ENCODE measurements at regions of chr1 and their contacts with region 1.

Region 1: DNA sequence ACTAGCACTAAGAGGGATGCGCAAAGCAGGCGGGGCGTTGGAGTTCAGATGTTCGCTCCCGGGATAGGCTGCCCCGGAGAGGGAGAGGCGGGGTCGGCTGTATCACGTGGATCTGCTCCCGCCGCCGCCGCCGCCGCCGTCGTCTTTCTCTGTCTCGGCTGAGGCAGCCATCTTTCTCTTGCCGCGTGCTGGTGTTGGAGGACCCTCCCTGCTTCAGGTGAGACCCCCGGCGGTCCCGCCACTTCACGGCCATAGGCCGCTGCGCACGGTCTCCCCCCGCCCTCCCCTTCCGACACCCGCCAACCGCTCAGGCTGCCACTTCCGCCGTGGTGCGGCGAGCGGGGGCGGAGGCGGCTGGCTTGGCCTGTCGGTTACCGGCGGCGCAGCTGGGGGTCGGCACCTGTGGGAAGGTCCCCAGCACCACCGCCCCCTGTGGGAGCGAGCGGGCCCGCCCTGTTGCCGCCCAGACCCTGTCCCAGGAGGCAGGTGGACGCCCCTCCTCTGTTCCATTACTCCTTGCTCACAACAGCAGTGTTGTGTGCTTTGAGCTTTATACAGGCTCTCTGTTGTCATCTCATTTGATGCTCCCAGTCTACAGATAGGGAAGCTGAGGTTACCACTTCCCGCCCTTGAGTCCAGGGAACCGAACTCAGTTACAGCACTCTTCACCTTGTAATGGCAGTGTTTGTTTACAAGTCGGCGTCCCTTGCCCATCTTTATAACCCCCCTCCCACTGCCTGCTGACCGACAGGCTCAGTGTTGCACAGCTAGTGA is at the start of gene BTF3L4:
- DNase-seq: peak; percentile 91
- ATAC-seq: peak; percentile 94
- H3K4me3 ChIP-seq: peak within 1 kb of the TSS; percentile 85 to 89 (median 87)
- H3K27ac ChIP-seq: peak within 1 kb of the TSS; percentile 91
- H3K4me1 ChIP-seq: peaks cover 51% of the 10 kb centered on the region
- H3K27me3 ChIP-seq: no peaks in the 10 kb centered on the region; a peak in 1 of 5 replicates
- CTCF ChIP-seq: no peak
- EP300 ChIP-seq: no peak
- POLR2A ChIP-seq: peak; percentile 66 to 70
- RAD21 ChIP-seq: no peak; the same call in 1 of the 2 replicates
- total RNA-seq, gene BTF3L4: 74.3 and 112 TPM in 2 replicates

Region 2: GRCh38 chr1:52007215-52008002 is 48.9 kb before region 1 on chr1:
- CTCF ChIA-PET with region 1: no interaction called
- POLR2A ChIA-PET with region 1: interaction called, 13 read pairs
- in situ Hi-C with region 1: no loop called
- intact Hi-C with region 1: no loop called
- DNase-seq: no peak
- ATAC-seq: no peak
- H3K4me3 ChIP-seq: no peak overlapping the region
- H3K27ac ChIP-seq: no peak overlapping the region
- H3K4me1 ChIP-seq: peaks cover 28% of the 10 kb centered on the region
- H3K27me3 ChIP-seq: no peaks in the 10 kb centered on the region
- CTCF ChIP-seq: no peak
- EP300 ChIP-seq: no peak
- POLR2A ChIP-seq: no peak
- RAD21 ChIP-seq: no peak

Region 3: GRCh38 chr1:52033190-52034049 is 22.9 kb before region 1 on chr1 and contains the start of gene KTI12:
- CTCF ChIA-PET with region 1: no interaction called
- POLR2A ChIA-PET with region 1: interaction called, 25 read pairs
- in situ Hi-C with region 1: no loop called
- intact Hi-C with region 1: loop called (anchors 2 kb)
- DNase-seq: peak; percentile 82
- ATAC-seq: peak; percentile 87
- H3K4me3 ChIP-seq: peak within 1 kb of the TSS; percentile 75 to 95 (median 88)
- H3K27ac ChIP-seq: peak within 1 kb of the TSS; percentile 80
- H3K4me1 ChIP-seq: peaks cover 76% of the 10 kb centered on the region
- H3K27me3 ChIP-seq: no peaks in the 10 kb centered on the region; a peak in 1 of 5 replicates
- CTCF ChIP-seq: no peak
- EP300 ChIP-seq: no peak
- POLR2A ChIP-seq: peak; percentile 77 to 82
- RAD21 ChIP-seq: peak; percentile 21; the same call in 1 of the 2 replicates
- total RNA-seq, gene KTI12: 10.2 and 11.8 TPM in 2 replicates

Region 4: DNA sequence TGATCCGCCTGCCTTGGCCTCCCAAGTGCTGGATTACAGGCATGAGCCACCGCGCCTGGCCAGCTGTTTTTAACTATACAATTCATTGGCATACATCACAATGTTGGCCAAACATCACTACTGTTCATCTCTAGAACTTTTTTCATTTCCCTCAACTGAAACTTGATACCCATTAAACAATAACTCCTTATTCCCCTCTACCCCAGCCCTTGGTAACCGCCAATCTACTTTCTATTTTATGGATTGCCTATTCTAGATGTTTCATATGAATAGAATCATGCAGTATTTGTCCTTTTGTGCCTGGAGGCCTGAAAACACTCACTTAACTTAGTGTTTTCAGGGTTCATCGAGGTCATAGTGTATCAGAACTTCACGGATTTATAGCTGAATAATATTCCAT is 15.9 kb after region 1 on chr1:
- CTCF ChIA-PET with region 1: no interaction called
- POLR2A ChIA-PET with region 1: interaction called, 10 read pairs
- in situ Hi-C with region 1: no loop called
- intact Hi-C with region 1: no loop called
- DNase-seq: no peak
- ATAC-seq: no peak
- H3K4me3 ChIP-seq: no peak overlapping the region
- H3K27ac ChIP-seq: no peak overlapping the region
- H3K4me1 ChIP-seq: peaks cover 8% of the 10 kb centered on the region
- H3K27me3 ChIP-seq: no peaks in the 10 kb centered on the region
- CTCF ChIP-seq: no peak
- EP300 ChIP-seq: no peak
- POLR2A ChIP-seq: no peak
- RAD21 ChIP-seq: no peak

Region 5: DNA sequence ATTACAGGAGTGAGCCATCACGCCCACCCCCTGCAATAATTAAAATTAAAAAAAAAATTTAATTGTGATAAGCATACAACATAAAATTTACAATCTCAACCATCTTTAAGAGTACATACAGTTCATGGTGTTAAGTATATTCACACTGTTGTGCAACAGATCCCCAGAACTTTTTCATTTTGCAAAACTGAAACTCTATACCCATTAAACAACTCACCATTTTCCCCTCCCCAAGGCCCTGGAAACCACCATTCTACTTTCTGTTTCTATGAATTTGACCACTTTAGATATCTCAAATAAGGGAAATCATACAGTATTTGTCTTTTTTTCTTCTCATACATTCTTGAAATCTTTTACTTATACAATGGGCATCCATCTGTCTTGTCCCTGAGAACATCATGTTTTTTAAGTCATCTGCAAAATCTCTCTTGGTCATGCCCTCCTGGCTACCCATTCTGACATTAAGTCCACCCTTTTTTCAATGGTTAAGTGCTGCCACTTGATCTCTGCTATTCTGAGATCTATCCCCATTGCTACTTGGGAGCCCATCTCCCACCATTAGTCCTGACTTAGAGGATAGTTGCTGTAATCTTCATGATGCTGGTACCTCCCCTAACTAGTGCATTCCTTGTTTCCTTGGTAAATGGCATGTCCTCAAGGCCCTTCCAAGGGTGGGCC is 46.1 kb after region 1 on chr1:
- CTCF ChIA-PET with region 1: no interaction called
- POLR2A ChIA-PET with region 1: interaction called, 8 read pairs
- in situ Hi-C with region 1: no loop called
- intact Hi-C with region 1: loop called (anchors 1 kb)
- DNase-seq: no peak
- ATAC-seq: no peak
- H3K4me3 ChIP-seq: no peak overlapping the region
- H3K27ac ChIP-seq: no peak overlapping the region
- H3K4me1 ChIP-seq: peaks cover 19% of the 10 kb centered on the region
- H3K27me3 ChIP-seq: no peaks in the 10 kb centered on the region
- CTCF ChIP-seq: no peak
- EP300 ChIP-seq: no peak
- POLR2A ChIP-seq: no peak
- RAD21 ChIP-seq: no peak

Measured in HepG2 (cell line).